Activated CD4-positive, alpha-beta T cell treated with anti-CD3 and anti-CD28 coated beads, Interleukin-2, amount 10 ng/mL, durations not matched to agents 24 days and 14 days (primary cell): ENCODE measurements at regions of chr7 and their contacts with region 1.

Region 1: GRCh38 chr7:84533182-84533581 is 338.6 kb upstream of the SEMA3A start:
- DNase-seq: no peak
- H3K4me3 Mint-ChIP-seq: no peak overlapping the region
- H3K27ac Mint-ChIP-seq: no peak overlapping the region
- H3K4me1 Mint-ChIP-seq: no peaks in the 10 kb centered on the region
- H3K27me3 Mint-ChIP-seq: no peaks in the 10 kb centered on the region

Region 2: DNA sequence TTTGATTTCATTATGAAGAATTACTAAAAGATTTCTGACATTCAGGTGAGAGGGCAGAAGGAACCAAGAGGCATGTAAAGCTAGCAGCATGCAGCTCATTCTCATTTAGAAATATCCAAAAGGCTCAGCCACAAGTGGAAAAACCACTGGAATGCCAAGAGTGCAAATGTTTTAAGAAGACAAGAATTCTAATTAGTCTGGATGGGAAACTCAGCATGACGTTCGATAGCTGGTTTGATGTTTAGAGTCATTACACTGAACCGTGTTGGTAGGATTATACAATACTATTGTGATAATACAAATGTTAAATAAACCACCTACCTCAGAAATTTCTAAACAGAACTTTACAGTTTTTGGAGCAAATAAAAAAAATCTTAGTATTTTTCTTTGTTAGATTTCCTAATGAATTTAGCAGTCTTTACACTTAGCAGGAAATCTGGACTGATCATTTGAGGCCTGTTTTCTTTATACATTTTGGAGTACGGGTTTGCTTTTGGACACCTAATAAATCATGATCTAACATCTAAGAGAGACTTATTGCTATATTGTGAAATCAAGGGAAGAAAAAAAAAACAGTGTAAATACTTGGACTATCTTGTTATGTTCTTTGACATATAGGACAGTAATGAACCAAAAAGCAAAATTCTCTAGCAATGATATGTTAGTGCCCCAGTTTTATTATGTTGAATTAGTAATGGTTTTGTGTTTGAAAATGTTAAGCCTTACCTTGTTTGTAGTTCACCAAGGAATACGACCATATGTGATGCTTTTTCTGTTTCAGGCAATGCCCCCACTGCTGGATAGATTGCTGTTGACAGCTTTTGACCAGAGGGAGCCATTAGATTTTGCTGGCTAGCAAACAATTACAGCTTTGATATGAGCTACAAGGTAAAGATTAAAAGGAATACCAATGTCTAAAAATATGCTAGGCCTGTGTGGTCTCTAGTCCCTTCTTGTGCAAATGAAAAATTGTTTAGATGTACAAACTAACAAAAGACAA is 15.5 kb after region 1 on chr7:
- intact Hi-C with region 1: loop called (anchors 1 kb)
- DNase-seq: no peak
- H3K4me3 Mint-ChIP-seq: no peak overlapping the region
- H3K27ac Mint-ChIP-seq: no peak overlapping the region
- H3K4me1 Mint-ChIP-seq: no peaks in the 10 kb centered on the region
- H3K27me3 Mint-ChIP-seq: no peaks in the 10 kb centered on the region